MCF 10A (cell line): ENCODE measurements at regions of chr10 and their contacts with region 1.

Region 1: DNA sequence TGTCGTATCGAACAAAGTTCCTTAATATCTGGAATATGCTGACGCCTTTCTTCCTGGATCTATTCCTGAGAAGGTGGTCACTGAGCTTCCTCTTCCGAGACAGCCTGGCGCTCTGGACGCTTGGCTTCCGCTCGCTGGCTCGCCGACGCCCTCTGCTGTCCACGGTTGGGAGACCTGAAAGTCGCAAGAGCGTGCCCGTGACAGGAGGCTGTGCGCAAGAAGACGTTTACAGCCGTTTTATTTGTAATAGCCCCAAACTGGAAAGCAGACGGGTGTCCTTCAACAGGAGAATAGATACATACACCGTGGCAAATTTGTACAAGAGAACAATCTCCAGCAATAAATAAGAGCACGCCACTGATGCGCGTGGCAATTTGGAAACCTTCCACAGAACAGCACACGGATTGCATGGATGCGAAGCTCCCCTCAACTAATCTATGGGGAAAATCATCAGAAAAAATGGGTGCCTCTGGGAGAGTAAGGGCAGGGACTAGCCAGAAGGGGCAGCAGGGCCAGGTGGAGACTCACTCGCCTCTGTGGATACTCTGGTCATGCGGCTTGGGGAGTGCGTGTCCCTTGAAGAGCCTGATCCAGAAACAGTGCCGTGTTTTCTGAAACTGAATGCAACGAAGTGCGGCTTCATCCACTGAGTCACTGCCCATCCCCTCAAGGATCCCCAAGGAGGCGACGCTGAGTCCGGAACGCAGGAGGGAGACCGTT is 41.5 kb upstream of the BNIP3 start:
- DNase-seq: peak; percentile 73
- H3K4me3 Mint-ChIP-seq: peak overlapping the region; percentile 24
- H3K27ac Mint-ChIP-seq: no peak overlapping the region
- H3K4me1 Mint-ChIP-seq: peaks cover 5% of the 10 kb centered on the region
- H3K27me3 Mint-ChIP-seq: peaks cover 44% of the 10 kb centered on the region
- CTCF ChIP-seq: peak; percentile 80

Region 2: DNA sequence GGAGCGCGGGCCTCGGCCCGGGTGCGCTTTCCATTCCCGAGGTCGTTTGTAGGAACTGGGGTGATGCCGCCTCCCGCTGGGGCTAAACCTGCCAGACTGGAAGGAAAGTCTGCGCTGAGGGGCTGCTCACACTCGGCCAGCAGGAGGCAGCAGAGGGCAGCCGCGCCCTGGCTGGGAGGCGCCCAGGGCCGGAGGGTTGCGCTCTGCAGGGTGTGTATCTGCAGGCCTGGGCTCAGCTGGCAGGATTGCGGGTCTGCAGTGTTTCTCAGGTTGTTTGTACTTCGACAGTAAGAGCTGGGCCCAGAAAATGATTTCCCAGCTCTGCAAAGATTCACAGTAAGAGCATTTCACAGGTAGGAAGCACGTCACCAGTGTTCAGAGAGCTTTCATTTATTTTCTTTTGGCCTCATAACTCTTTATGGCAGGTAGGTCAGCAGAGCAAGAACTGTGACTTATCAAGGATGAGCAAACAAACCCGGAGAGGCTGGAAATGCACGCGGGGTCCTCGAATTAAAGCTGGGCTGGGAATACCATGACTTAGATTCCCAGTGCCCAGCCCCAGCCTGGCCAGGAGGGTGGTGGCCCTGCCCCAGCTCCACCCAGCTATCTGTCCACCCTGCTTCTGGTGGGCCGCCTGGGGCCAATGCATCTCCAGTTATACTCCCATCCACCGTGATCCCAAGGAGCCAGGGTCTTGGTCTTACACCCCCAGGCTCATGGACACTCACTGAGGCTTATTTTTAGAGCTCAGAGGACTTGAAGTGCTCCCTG is 137.7 kb before region 1 on chr10:
- CTCF ChIA-PET with region 1: interaction called, 47 read pairs
- POLR2A ChIA-PET with region 1: interaction called, 4 read pairs
- intact Hi-C with region 1: loop called (anchors 1 kb)
- DNase-seq: peak; percentile 80
- H3K4me3 Mint-ChIP-seq: no peak overlapping the region
- H3K27ac Mint-ChIP-seq: no peak overlapping the region
- H3K4me1 Mint-ChIP-seq: peaks cover 6% of the 10 kb centered on the region
- H3K27me3 Mint-ChIP-seq: no peaks in the 10 kb centered on the region
- CTCF ChIP-seq: peak; percentile 97

Region 3: DNA sequence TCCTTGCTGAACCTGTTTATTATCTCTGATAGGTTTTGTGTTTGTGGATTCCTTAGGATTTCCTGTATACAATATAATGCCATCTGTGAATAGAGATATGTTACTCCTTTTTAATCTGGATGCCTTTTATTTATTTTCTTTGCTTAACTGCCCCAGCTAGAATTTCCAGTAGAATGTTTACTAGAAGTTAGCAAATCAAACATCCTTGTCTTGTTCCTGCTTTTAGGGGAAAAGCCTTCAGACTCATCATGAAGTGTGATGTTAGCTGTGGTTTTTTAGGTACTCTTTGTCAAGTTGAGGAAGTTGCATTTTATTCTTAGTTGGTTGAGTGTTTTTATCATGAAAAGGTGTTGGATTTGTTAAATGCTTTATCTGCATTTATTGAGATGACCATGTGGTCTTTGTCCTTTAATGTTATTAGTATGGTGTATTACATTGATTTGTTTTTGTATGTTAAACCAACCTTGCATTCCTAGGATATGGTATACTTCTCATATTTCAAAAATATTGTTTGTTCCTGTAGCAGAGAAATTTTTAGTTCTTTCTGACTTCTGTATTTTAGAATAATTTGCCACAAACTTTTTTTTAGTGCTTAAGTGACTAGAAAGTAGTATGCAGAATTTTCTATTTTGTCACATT is 98.1 kb before region 1 on chr10:
- CTCF ChIA-PET with region 1: interaction called, 12 read pairs
- POLR2A ChIA-PET with region 1: no interaction called
- intact Hi-C with region 1: no loop called
- DNase-seq: no peak
- H3K4me3 Mint-ChIP-seq: no peak overlapping the region
- H3K27ac Mint-ChIP-seq: no peak overlapping the region
- H3K4me1 Mint-ChIP-seq: peaks cover 31% of the 10 kb centered on the region
- H3K27me3 Mint-ChIP-seq: no peaks in the 10 kb centered on the region
- CTCF ChIP-seq: no peak

Region 4: GRCh38 chr10:131973160-131973951 is 49.9 kb before region 1 on chr10:
- CTCF ChIA-PET with region 1: interaction called, 33 read pairs
- POLR2A ChIA-PET with region 1: no interaction called
- intact Hi-C with region 1: no loop called
- DNase-seq: no peak
- H3K4me3 Mint-ChIP-seq: no peak overlapping the region
- H3K27ac Mint-ChIP-seq: no peak overlapping the region
- H3K4me1 Mint-ChIP-seq: no peaks in the 10 kb centered on the region
- H3K27me3 Mint-ChIP-seq: no peaks in the 10 kb centered on the region
- CTCF ChIP-seq: no peak

Region 5: DNA sequence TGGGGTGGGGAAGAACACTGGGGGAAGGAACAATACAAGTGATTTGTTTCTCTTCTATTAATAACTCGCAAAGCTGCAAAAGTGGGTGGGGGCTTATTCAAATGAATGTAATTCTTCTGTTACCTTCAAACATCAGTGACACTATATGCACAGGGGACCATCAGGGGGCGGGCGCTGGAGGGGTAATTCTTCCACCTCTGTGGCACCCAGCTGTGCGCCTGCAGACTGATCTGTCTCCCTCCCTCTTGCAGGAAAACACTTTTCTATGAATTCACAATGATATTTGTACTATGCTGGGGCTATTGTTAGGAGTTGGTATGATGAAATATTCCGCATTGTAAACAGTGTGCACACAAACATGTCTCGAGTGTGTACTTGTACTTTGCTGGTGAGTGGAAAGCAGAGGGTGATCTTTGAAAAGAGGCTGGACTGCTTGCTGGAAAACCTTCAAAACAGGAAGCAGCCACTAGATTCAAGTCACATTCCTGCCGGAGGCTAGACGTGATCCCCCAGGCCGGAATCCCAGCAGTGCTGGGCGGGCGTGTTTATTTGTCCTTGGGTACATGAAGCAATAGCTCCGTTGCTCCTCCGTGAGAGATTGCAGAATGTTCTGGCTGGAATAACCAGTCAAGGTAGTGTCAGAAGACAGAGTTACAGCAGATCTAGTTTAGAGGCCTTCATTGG is 25.7 kb before region 1 on chr10:
- CTCF ChIA-PET with region 1: interaction called, 37 read pairs
- POLR2A ChIA-PET with region 1: interaction called, 11 read pairs
- intact Hi-C with region 1: no loop called
- DNase-seq: peak; percentile 87
- H3K4me3 Mint-ChIP-seq: peak overlapping the region; percentile 54
- H3K27ac Mint-ChIP-seq: peak overlapping the region; percentile 97
- H3K4me1 Mint-ChIP-seq: peaks cover 25% of the 10 kb centered on the region
- H3K27me3 Mint-ChIP-seq: no peaks in the 10 kb centered on the region
- CTCF ChIP-seq: no peak

Region 6: GRCh38 chr10:132036887-132037675 is 13.8 kb after region 1 on chr10:
- CTCF ChIA-PET with region 1: interaction called, 22 read pairs
- POLR2A ChIA-PET with region 1: no interaction called
- intact Hi-C with region 1: no loop called
- DNase-seq: no peak
- H3K4me3 Mint-ChIP-seq: no peak overlapping the region
- H3K27ac Mint-ChIP-seq: no peak overlapping the region
- H3K4me1 Mint-ChIP-seq: no peaks in the 10 kb centered on the region
- H3K27me3 Mint-ChIP-seq: peaks cover 11% of the 10 kb centered on the region
- CTCF ChIP-seq: no peak